GM10248 (cell line): ENCODE measurements at regions of chr17 and their contacts with region 1.

Region 1: GRCh38 chr17:47990962-47991731 is 20.2 kb downstream of the CDK5RAP3 start:
- DNase-seq: no peak
- CTCF ChIP-seq: no peak

Region 2: GRCh38 chr17:47895856-47896671 is 95.1 kb before region 1 on chr17 and contains the start of gene SP2:
- CTCF ChIA-PET with region 1: no interaction called
- POLR2A ChIA-PET with region 1: no interaction called
- DNase-seq: peak; percentile 99
- CTCF ChIP-seq: no peak

Region 3: DNA sequence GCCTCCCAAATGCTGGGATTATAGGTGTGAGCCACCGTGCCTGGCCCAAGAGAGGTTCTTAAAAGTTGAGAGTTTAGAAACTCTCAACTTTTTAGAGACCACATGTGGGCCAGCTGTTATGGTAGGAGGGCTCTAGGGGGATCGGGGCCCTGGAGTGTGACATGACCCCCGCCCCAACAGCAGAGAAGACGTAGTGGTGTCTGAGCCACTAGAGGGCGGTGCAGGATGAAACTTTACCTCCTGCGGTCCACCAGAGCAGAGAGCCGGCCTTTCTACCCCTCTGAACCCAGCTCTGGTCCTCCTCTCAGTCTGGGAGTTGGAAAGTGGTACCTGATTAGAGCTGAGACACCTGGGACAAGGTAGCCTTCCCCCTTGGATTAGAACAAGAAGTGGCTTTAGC is 12.8 kb before region 1 on chr17:
- CTCF ChIA-PET with region 1: interaction called, 27 read pairs
- POLR2A ChIA-PET with region 1: interaction called, 7 read pairs
- DNase-seq: peak; percentile 81
- CTCF ChIP-seq: peak; percentile 71

Region 4: GRCh38 chr17:48011405-48012150 is 20.4 kb after region 1 on chr17:
- CTCF ChIA-PET with region 1: interaction called, 143 read pairs
- POLR2A ChIA-PET with region 1: no interaction called
- DNase-seq: peak; percentile 73
- CTCF ChIP-seq: peak; percentile 66